ENCODE measurements at regions of chr10 and their contacts with region 1.

Region 1: DNA sequence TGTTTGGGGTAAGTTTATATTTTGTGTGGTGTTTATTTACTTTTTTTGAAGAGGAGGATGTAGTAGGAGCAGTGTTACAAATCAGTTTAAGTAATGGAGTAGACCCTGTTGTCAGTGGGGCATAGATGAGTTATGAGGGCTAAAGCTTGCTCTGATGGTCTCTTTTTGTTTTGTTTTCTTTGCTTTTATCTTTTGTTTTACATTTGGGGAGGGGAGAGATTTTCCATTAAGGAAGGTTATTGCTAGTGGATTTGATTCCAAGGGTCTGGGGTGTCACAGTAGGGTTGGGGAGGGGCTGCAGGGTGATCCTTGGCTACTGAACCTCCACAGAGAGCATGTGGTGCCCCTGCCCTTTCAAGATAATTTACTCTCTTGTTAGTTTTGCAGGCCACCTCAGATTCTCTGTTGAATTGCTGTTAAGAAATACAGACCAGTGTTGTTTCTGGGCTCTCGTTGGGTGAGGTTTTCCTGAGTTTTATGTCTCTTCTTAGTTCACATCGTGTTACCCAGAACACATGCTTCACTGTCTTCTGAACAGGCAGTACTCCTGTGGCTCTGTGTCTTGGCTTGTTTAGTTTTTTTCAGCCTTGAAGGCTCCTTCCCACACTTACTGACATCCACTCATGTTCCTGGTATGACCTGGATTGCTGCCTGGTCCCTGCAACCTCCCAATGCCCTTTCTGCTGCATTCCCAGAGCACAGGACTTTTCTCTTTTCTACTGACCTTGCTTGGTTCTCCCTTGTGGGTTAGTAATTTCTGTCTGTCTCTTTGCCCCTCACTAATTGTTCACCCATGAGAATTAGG is 4.2 kb downstream of the KIFBP start:
- DNase-seq: no peak
- H3K4me3 ChIP-seq: no peak overlapping the region
- H3K4me1 ChIP-seq: peaks cover 19% of the 10 kb centered on the region; the same call in 1 of the 2 replicates
- H3K27me3 ChIP-seq: no peaks in the 10 kb centered on the region

Region 2: DNA sequence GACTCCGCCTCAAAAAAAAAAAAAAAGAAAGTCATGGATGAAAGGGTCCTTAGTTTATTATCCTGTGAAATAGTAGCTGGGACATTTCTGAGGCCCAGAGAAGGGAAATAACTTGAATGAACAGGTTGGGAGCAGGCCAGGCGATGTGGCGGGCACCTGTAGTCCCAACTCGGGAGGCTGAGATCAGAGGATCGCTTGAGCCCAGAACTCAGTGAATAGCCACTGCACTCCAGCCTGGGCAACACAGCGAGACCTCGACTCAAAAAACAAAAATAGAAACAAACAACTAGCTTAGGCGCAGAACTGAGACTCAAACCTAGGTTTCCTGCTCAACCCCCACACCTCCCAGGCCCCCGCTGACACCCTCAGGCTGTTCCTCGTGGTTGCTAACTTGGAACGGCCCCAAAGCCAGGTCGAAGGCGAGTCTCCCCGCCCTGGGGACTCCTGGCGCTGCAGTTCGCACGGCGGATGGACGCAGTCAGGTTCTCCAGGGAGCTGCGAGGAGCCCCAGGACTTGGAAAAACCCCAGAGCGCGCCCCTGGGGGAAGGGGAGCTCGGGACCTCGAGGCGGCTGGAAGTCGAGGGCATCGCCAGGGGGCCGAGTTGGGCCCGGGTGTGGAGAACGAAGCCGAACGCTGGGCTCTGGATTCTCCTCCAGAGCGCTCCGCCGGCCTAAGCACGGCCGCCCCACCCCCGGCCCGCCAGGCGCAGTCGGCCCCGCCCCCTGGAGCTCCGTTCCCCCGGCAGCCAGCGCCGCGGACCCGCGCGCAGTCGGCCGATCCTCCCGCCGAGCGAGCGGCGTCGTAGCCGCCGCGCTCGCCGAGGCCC is 165.9 kb before region 1 on chr10 and contains the start of gene STOX1:
- in situ Hi-C with region 1: no loop called
- DNase-seq: peak; percentile 51 to 83
- H3K4me3 ChIP-seq: peak within 1 kb of the TSS; percentile 69
- H3K4me1 ChIP-seq: peaks cover 7% of the 10 kb centered on the region
- H3K27me3 ChIP-seq: no peaks in the 10 kb centered on the region

Region 3: DNA sequence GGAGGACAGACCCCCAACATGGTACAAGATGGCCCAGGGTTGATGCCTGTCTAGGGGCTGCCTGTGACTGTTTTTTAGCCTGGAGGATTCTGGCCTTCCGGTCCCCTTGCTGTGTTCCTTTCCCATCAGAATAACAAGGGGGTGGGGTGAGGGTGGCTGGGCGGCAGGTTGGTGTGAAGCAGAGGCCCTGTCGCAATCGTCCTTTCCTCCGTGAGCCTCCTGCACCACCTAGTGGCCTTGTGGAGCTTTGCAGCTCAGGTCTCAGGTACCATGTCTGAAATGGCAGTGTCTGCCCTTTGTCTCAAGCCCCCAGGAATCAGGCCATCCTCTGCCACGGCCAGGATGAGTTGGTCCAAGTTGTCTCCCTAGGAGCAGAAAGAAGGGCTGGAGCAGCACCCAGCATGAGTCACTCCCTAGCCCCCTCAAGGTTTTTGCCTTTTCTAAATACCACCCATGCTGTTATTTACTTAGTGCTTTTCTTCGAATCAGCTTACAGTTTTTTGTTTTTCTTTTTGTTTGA is 399.7 kb after region 1 on chr10:
- in situ Hi-C with region 1: loop called (anchors 10 kb)
- DNase-seq: peak; percentile 81 to 88
- H3K4me3 ChIP-seq: no peak overlapping the region
- H3K4me1 ChIP-seq: no peaks in the 10 kb centered on the region
- H3K27me3 ChIP-seq: no peaks in the 10 kb centered on the region